ENCODE measurements at regions of chr1 and their contacts with region 1.

Region 1: DNA sequence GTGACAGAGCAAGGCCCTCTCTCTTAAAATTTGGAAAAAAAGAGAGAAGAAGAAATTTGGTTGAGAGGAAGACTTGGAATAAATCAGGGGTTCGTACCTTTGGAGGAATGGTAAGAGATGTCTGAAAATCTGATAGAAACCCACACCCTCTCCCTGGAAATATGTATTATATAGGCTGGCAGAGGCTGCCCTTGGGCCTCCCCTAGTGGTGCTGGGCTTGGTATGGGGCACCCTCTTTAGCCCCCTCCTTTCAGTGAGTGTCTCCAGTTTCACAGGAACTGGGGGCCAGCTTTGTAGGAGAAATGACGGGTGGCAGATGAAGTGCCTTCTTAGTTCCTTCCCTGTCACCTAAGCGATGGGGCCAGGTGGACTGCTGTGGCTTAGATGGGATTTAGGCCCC is 82.9 kb upstream of the SLC2A1 start:
- DNase-seq: no peak
- H3K4me3 ChIP-seq: no peak overlapping the region
- H3K27ac ChIP-seq: no peak overlapping the region
- H3K4me1 ChIP-seq: no peaks in the 10 kb centered on the region
- H3K27me3 ChIP-seq: no peaks in the 10 kb centered on the region
- CTCF ChIP-seq: no peak

Region 2: DNA sequence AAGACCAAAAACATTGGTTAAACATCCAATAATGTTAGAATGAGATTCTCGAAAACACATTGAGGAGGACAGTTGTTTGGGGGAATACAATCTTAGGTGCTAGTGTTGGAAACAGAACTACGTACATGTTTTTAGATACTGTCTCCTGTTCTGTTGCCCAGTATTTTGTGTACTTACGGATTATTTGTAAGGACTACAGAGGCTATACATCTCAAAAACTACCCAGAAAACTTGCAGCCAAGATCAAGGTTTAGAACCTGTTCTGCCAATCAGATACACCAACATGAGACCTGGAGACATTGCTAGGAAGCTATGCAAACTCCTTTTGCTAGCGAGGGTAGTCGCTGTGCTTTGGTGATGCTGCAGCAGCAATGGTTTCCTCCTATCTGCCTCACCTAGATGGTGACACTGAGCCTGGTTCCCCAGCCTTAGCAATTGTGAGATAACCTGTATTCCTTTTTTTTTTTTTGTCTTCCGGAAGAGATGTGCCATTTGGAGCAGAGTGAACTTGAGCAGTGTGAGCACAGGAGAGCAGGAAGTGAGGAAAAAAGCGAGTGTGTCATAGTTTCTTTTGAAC is 337.6 kb before region 1 on chr1:
- CTCF ChIA-PET with region 1: no interaction called
- POLR2A ChIA-PET with region 1: interaction called, 16 read pairs
- intact Hi-C with region 1: no loop called
- DNase-seq: no peak
- H3K4me3 ChIP-seq: no peak overlapping the region
- H3K27ac ChIP-seq: no peak overlapping the region
- H3K4me1 ChIP-seq: peaks cover 10% of the 10 kb centered on the region
- H3K27me3 ChIP-seq: no peaks in the 10 kb centered on the region
- CTCF ChIP-seq: no peak

Region 3: DNA sequence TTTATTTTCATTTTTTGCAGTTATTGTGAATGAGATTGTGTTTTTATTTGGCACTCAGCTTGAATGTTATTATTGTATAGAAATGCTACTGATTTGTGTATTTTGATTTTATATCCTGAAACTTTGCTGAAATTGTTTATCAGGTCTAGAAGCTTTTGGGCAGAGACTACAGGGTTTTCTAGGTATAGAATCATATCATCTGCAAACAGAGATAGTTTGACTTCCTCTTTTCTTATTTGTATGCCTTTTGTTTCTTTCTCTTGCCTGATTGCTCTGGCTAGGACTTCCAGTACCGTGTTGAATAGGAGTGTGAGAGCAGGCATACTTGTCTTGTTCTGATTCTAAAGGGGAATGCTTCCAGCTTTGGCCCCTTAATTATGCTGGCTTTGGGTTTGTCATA is 167.9 kb before region 1 on chr1:
- CTCF ChIA-PET with region 1: no interaction called
- POLR2A ChIA-PET with region 1: interaction called, 13 read pairs
- intact Hi-C with region 1: no loop called
- DNase-seq: no peak
- H3K4me3 ChIP-seq: no peak overlapping the region
- H3K27ac ChIP-seq: no peak overlapping the region
- H3K4me1 ChIP-seq: no peaks in the 10 kb centered on the region
- H3K27me3 ChIP-seq: no peaks in the 10 kb centered on the region
- CTCF ChIP-seq: no peak

Region 4: DNA sequence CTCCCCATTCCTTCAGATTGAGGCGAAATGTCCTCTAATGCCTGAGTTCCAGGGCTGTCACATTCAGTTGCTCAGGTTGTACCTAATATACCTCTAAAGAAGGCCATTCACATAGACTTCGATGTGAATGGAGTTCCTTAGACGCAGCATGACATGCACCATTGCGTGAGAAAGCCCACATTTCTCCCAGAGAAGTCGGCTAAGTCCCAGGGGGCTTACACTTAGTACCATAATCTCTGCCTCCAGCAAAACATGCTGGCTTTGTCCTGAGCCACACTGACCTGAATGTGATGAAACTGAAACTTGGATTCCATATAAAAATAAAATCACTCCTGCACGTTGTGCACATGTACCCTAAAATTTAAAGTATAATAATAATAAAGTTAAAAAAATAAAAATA is 59.7 kb before region 1 on chr1:
- CTCF ChIA-PET with region 1: interaction called, 17 read pairs
- POLR2A ChIA-PET with region 1: no interaction called
- intact Hi-C with region 1: no loop called
- DNase-seq: no peak
- H3K4me3 ChIP-seq: no peak overlapping the region
- H3K27ac ChIP-seq: no peak overlapping the region
- H3K4me1 ChIP-seq: no peaks in the 10 kb centered on the region
- H3K27me3 ChIP-seq: no peaks in the 10 kb centered on the region
- CTCF ChIP-seq: no peak